CD4-positive, alpha-beta T cell (primary cell): ENCODE measurements at regions of chr3 and their contacts with region 1.

Region 1: GRCh38 chr3:194344012-194344411 is 7.1 kb downstream of the CPN2 start:
- DNase-seq: peak; percentile 60 to 85 (median 66)
- ATAC-seq: peak; percentile 80
- H3K4me3 ChIP-seq: no peak overlapping the region
- H3K4me3 Mint-ChIP-seq: no peak overlapping the region
- H3K27ac ChIP-seq: no peak overlapping the region
- H3K27ac Mint-ChIP-seq: no peak overlapping the region
- H3K4me1 ChIP-seq: no peaks in the 10 kb centered on the region
- H3K4me1 Mint-ChIP-seq: no peaks in the 10 kb centered on the region
- H3K27me3 ChIP-seq: no peaks in the 10 kb centered on the region
- H3K27me3 Mint-ChIP-seq: peaks cover 14% of the 10 kb centered on the region
- CTCF ChIP-seq: peak; percentile 98

Region 2: GRCh38 chr3:192467230-192468140 is 1876.5 kb before region 1 on chr3:
- CTCF ChIA-PET with region 1: no interaction called
- POLR2A ChIA-PET with region 1: no interaction called
- intact Hi-C with region 1: loop called in 1 of 2 experiments (anchors 10 kb)
- DNase-seq: peak; percentile 11 to 64 (median 25)
- ATAC-seq: peak; percentile 79
- H3K4me3 ChIP-seq: no peak overlapping the region
- H3K4me3 Mint-ChIP-seq: no peak overlapping the region
- H3K27ac ChIP-seq: no peak overlapping the region
- H3K27ac Mint-ChIP-seq: no peak overlapping the region
- H3K4me1 ChIP-seq: no peaks in the 10 kb centered on the region
- H3K4me1 Mint-ChIP-seq: no peaks in the 10 kb centered on the region
- H3K27me3 ChIP-seq: peaks cover 0 to 4% of the 10 kb centered on the region in 2 experiments
- H3K27me3 Mint-ChIP-seq: peaks cover 42% of the 10 kb centered on the region
- CTCF ChIP-seq: peak; percentile 77

Region 3: DNA sequence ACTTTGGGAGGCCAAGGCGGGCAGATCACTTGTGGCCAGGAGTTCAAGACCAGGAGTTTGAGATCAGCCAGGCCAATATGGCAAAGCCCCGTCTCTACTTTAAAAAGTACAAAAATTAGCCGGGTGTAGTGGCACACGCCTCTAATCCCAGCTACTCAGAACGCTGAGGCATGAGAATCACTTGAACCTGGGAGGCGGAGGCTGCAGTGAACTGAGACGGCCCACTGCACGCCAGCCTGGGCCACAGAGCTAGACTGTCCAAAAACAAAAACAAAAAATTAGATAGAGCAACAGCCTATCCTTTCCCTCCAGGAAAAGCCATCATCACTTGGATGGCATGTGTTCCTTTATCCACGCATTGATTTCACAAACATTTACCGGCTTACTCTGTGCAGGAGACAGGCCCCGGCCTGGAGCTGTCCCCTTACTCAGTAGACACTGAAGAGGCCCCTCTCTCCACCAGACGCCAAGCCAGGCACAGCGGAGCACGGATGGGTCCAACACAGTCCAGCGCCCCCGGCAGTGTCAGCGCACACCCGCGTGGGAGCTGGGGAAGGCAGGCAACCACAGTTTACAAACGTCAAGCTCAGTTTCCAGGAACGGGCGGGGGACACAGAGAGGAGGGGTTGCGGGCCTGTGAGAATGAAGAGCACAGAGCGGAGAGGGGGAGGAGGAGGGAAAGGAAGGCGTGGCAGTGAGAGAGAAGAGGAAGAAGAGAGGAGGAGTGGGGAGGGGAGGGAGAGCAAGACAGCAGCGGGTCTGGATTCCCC is 52.0 kb after region 1 on chr3:
- CTCF ChIA-PET with region 1: interaction called, 5 read pairs
- POLR2A ChIA-PET with region 1: interaction called, 14 read pairs
- intact Hi-C with region 1: no loop called
- DNase-seq: peak; percentile 40 to 81 (median 62)
- ATAC-seq: peak; percentile 79
- H3K4me3 ChIP-seq: peak overlapping the region; percentile 63
- H3K4me3 Mint-ChIP-seq: peak overlapping the region; percentile 90
- H3K27ac ChIP-seq: peak overlapping the region in 1 of 2 donors; percentile 50
- H3K27ac Mint-ChIP-seq: peak overlapping the region; percentile 94
- H3K4me1 ChIP-seq: peaks cover 39% of the 10 kb centered on the region
- H3K4me1 Mint-ChIP-seq: peaks cover 56% of the 10 kb centered on the region
- H3K27me3 ChIP-seq: peaks cover 0 to 10% of the 10 kb centered on the region in 2 experiments
- H3K27me3 Mint-ChIP-seq: no peaks in the 10 kb centered on the region
- CTCF ChIP-seq: no peak

Region 4: GRCh38 chr3:194404365-194405140 is 60.5 kb after region 1 on chr3:
- CTCF ChIA-PET with region 1: interaction called, 9 read pairs
- POLR2A ChIA-PET with region 1: no interaction called
- intact Hi-C with region 1: loop called in 1 of 2 experiments (anchors 2 kb)
- DNase-seq: peak in 10 of 14 experiments; percentile 13 to 81 (median 28)
- ATAC-seq: peak; percentile 84
- H3K4me3 ChIP-seq: no peak overlapping the region
- H3K4me3 Mint-ChIP-seq: peak overlapping the region; percentile 6
- H3K27ac ChIP-seq: no peak overlapping the region
- H3K27ac Mint-ChIP-seq: no peak overlapping the region
- H3K4me1 ChIP-seq: peaks cover 4% of the 10 kb centered on the region
- H3K4me1 Mint-ChIP-seq: peaks cover 16% of the 10 kb centered on the region
- H3K27me3 ChIP-seq: no peaks in the 10 kb centered on the region
- H3K27me3 Mint-ChIP-seq: no peaks in the 10 kb centered on the region
- CTCF ChIP-seq: peak; percentile 90